ENCODE measurements at regions of chr15 and their contacts with region 1.

Region 1: GRCh38 chr15:22888120-22888859 is 49.8 kb downstream of the NIPA2 start:
- DNase-seq: peak; percentile 37
- H3K4me3 ChIP-seq: no peak overlapping the region
- H3K27ac ChIP-seq: no peak overlapping the region
- H3K4me1 ChIP-seq: no peaks in the 10 kb centered on the region
- H3K27me3 ChIP-seq: no peaks in the 10 kb centered on the region
- CTCF ChIP-seq: no peak

Region 2: GRCh38 chr15:22786868-22787698 is 101.2 kb before region 1 on chr15:
- CTCF ChIA-PET with region 1: no interaction called
- POLR2A ChIA-PET with region 1: no interaction called
- intact Hi-C with region 1: loop called (anchors 10 kb)
- DNase-seq: peak; percentile 39
- H3K4me3 ChIP-seq: peak overlapping the region; percentile 73
- H3K27ac ChIP-seq: peak overlapping the region; percentile 53
- H3K4me1 ChIP-seq: peaks cover 4% of the 10 kb centered on the region
- H3K27me3 ChIP-seq: no peaks in the 10 kb centered on the region
- CTCF ChIP-seq: no peak

Region 3: DNA sequence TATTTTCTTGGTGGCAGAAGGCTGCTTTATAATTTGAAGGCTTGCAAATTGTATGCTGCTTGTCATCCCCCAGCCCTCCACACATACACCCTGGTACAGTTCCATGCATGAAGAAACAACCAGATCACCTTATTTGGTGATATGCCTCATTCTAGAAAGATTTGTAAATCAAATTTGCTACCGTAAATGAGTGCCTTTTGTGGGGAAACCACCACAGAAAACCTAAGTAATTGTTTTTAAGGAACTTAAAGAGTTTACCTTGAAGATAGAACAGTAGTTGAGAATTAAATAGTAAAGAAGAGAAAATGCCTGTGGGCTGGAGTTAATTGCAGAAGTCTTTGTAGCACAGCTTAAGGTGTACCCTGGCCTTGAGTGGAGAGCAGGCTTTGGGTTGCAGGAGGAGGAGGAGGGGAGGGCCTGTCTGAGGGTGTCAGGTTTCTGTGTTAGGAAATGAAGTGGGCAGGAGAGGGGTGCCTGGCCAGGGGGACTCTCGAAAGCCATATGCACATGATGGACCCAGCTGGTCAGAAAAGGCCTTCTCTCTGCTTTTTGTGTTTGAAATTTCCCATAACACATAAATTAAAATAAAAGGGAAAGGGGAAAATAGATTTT is 42.9 kb before region 1 on chr15:
- CTCF ChIA-PET with region 1: no interaction called
- POLR2A ChIA-PET with region 1: no interaction called
- intact Hi-C with region 1: loop called (anchors 5 kb)
- DNase-seq: no peak
- H3K4me3 ChIP-seq: no peak overlapping the region
- H3K27ac ChIP-seq: no peak overlapping the region
- H3K4me1 ChIP-seq: peaks cover 6% of the 10 kb centered on the region
- H3K27me3 ChIP-seq: no peaks in the 10 kb centered on the region
- CTCF ChIP-seq: no peak

Region 4: DNA sequence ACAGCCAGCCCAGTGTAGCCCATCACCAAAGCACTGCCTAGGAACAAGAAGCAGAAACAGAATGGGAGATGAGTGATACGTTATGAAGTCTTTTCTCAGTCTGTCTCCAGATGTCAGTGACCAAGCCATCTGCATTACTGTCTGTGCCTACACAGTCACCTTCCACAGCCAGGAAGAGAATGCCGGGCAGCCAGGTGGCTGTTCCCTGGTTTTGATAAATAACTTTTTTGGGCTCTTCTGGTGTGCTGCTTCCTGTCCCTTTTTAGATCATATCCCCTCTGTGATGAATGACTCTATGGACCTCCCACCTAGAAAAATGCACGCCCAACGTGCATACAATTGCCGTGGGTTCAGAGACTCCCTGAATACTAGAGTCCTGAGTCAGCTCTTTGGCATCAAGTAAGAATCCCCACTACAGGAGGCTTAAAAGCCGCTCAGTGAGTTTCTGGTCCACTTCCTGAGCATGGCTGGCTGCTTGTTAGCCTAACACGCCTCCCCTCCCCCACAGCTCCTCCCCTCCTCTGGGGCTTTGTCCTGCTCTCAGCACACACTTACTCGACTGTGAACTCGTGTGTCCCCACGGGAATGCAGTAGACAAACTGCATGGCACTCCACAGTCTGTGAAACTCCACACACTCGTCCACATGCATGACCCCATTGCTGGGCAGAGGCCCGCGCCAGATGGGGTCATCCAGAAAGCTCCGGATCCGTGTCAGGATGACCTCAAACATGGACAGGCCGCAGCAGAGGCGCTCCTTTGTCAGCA is 15.2 kb before region 1 on chr15:
- CTCF ChIA-PET with region 1: no interaction called
- POLR2A ChIA-PET with region 1: no interaction called
- intact Hi-C with region 1: no loop called
- DNase-seq: peak; percentile 85
- H3K4me3 ChIP-seq: no peak overlapping the region
- H3K27ac ChIP-seq: peak overlapping the region; percentile 56
- H3K4me1 ChIP-seq: peaks cover 3% of the 10 kb centered on the region
- H3K27me3 ChIP-seq: no peaks in the 10 kb centered on the region
- CTCF ChIP-seq: no peak

Measured in A673 (cell line).